GM10248 (cell line): ENCODE measurements at regions of chr17 and their contacts with region 1.

Region 1: DNA sequence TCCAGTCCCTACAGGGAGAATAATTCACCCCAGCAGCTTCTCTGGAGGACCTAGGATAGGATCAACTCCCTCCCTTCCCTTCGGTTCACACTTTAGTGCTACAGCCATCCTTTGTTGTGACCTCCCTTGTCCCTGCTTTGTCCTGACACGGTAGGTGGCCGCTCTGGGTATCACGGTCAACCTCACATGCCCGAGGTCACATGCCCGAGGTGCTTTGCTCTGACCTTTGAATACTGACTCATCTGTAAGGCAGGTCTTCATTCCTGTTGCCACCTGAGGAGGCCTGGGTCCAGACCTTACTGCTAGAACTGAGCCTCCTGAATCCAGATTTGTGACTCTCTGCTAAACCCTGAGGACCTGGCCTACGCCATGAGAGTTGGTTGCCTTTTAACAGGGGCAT is 19.7 kb downstream of the ALKBH5 start:
- DNase-seq: no peak
- CTCF ChIP-seq: no peak

Region 2: DNA sequence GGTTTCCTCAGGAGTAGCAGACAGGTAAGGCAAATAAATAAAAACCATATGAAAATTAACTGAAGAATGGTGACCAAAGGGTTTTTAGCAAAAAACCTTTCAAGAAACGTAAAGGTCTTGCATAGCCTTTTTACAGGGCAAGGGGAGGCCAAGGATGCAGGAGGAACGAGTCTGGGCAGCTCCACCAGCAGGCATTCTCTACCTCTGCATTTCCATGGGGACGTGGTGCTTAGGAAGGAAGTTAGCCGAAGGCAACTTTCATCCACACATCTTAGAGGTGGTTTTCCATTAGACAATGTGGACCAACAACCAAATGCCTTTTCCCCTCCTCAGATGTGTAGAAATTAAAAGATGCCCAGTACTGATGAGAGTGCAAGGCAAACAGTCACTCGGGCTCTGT is 251.8 kb before region 1 on chr17:
- CTCF ChIA-PET with region 1: no interaction called
- POLR2A ChIA-PET with region 1: interaction called, 13 read pairs
- DNase-seq: no peak
- CTCF ChIP-seq: no peak

Region 3: GRCh38 chr17:18183334-18184142 is 19.8 kb before region 1 on chr17 and contains the start of gene ALKBH5:
- CTCF ChIA-PET with region 1: interaction called, 19 read pairs
- POLR2A ChIA-PET with region 1: interaction called, 8 read pairs
- DNase-seq: peak; percentile 99
- CTCF ChIP-seq: no peak

Region 4: GRCh38 chr17:18217412-18218015 is 14.2 kb after region 1 on chr17:
- CTCF ChIA-PET with region 1: interaction called, 27 read pairs
- POLR2A ChIA-PET with region 1: no interaction called
- DNase-seq: peak; percentile 90
- CTCF ChIP-seq: peak; percentile 94

Region 5: DNA sequence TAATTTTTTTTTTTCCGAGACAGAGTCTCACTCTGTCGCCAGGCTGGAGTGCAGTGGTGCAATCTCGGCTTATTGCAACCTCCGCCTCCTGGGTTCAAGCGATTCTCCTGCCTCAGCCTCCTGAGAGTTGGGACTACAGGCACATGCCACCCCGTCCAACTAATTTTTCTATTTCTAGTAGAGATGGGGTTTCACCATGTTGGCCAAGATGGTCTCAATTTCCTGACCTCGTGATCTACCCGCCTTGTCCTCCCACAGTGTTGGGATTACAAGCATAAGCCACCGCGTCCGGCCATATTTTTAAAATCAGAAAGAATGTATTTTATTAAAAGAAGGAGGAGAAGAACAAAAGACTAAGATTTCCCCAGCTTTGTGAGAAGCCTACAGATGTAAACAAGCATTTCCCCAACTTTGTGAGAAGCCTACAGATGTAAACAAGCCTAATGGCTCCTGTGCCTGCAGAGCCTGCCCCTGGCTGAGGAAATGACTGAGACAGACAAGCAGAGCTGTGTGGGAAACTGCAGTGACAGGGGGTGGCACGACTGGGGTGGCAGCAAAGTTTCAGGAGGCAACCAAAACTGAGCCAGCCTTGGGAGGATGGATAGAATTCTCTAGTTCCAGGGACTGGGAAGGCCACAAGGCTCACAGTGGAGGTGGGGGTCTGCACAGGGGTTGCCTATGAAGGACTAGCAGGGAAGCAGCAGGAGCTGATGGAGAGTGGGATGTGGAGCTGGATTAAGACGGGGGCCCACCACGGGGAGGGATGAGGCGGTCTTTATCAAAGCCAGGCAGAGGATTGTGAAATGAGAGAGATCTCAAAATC is 88.6 kb after region 1 on chr17:
- CTCF ChIA-PET with region 1: no interaction called
- POLR2A ChIA-PET with region 1: no interaction called
- DNase-seq: no peak
- CTCF ChIP-seq: no peak